ENCODE measurements at regions of chr3 and their contacts with region 1.

Region 1: GRCh38 chr3:131381444-131382291 is at the start of gene NUDT16:
- DNase-seq: peak; percentile 100
- H3K4me3 ChIP-seq: peak within 1 kb of the TSS; percentile 68 to 100 (median 82)
- H3K27ac ChIP-seq: peak within 1 kb of the TSS; percentile 83 to 97 (median 90)
- H3K4me1 ChIP-seq: peaks cover 0 to 28% (median 20%) of the 10 kb centered on the region in 4 donors
- H3K27me3 ChIP-seq: no peaks in the 10 kb centered on the region
- CTCF ChIP-seq: no peak
- EP300 ChIP-seq: peak in 1 of 4 donors; percentile 68
- POLR2A ChIP-seq: peak; percentile 83 to 94
- total RNA-seq, gene NUDT16: 17.6 to 26.0 (median 21.8) TPM

Region 2: DNA sequence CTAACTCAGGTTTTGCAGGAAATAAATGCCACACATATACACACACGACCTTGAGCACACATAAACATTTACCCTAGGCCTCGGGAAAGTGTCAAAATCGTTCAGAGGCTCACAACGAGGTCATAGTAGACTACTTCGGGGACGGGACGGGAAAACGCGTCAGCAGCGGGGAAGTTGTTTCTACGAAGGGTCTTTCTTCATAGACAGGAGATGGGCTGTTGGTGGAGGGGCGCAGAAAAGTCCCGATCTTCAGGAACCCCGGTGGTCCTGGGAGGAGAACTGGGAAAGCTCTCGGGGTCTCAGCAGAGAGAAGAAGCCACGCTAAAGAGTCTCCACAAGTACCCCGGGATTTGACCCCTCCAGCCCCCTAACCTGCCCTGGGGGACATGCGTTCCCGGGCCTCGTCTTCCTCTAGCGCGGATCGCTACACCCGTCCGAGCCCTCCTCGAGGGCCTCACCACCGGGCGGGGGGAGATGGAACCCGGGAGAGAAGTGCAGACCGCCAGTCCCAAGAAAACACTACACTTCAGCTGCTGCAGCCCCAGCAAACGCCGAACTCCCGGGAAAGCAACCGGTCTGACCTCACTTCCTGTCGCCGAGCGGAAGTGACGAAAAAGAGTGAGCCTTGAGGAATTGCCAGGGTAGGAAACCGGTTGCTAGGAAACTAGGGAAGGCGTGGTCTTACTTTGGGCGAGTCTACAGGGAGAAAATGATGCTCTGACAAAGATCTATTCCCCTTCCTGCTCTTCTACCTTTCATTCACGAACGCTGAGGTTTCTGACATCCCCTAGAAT is 635.2 kb before region 1 on chr3 and contains the start of gene PIK3R4:
- intact Hi-C with region 1: loop called (anchors 10 kb)
- DNase-seq: peak; percentile 97
- H3K4me3 ChIP-seq: peak within 1 kb of the TSS; percentile 75 to 95 (median 88)
- H3K27ac ChIP-seq: peak within 1 kb of the TSS; percentile 82 to 91 (median 88)
- H3K4me1 ChIP-seq: peaks cover 0 to 47% (median 44%) of the 10 kb centered on the region in 4 donors
- H3K27me3 ChIP-seq: no peaks in the 10 kb centered on the region
- CTCF ChIP-seq: no peak
- EP300 ChIP-seq: no peak
- POLR2A ChIP-seq: peak; percentile 51 to 69
- total RNA-seq, gene PIK3R4: 25.8 to 39.2 (median 31.6) TPM

Region 3: GRCh38 chr3:130857326-130858026 is 524.2 kb before region 1 on chr3:
- intact Hi-C with region 1: no loop called
- DNase-seq: no peak
- H3K4me3 ChIP-seq: no peak overlapping the region
- H3K27ac ChIP-seq: no peak overlapping the region
- H3K4me1 ChIP-seq: no peaks in the 10 kb centered on the region
- H3K27me3 ChIP-seq: no peaks in the 10 kb centered on the region
- CTCF ChIP-seq: no peak
- EP300 ChIP-seq: no peak
- POLR2A ChIP-seq: no peak

Region 4: GRCh38 chr3:130892759-130893375 is 488.8 kb before region 1 on chr3:
- intact Hi-C with region 1: loop called (anchors 5 kb)
- DNase-seq: peak; percentile 77
- H3K4me3 ChIP-seq: peak overlapping the region; percentile 70 to 88 (median 78)
- H3K27ac ChIP-seq: peak overlapping the region; percentile 92 to 98 (median 95)
- H3K4me1 ChIP-seq: peaks cover 0 to 23% (median 20%) of the 10 kb centered on the region in 4 donors
- H3K27me3 ChIP-seq: no peaks in the 10 kb centered on the region
- CTCF ChIP-seq: peak; percentile 75 to 91 (median 83)
- EP300 ChIP-seq: no peak
- POLR2A ChIP-seq: no peak

Region 5: DNA sequence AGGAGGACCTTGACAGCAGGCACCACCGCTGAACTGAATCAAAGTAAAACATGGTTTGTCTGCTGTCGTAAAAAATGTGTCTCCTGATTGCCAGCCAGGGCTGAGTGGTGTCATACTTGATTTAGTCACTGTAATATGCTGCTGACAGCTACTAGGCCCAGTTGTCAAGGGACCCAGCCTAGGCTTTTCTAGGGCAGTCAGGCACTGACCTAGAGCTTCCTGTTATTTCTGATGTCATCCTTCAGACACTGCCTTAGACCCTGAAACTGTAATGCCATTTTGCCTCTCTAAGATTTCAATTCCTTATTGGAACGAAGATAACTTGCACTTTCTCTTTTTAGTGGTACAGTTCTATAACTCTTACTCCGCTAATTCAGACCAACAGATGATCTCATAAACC is 123.8 kb after region 1 on chr3:
- intact Hi-C with region 1: loop called (anchors 2 kb)
- DNase-seq: no peak
- H3K4me3 ChIP-seq: no peak overlapping the region
- H3K27ac ChIP-seq: no peak overlapping the region
- H3K4me1 ChIP-seq: peaks cover 0 to 27% (median 21%) of the 10 kb centered on the region in 4 donors
- H3K27me3 ChIP-seq: no peaks in the 10 kb centered on the region
- CTCF ChIP-seq: no peak
- EP300 ChIP-seq: no peak
- POLR2A ChIP-seq: no peak

Region 6: GRCh38 chr3:132416807-132417694 is 1035.4 kb after region 1 on chr3 and contains the start of gene DNAJC13:
- intact Hi-C with region 1: no loop called
- DNase-seq: peak; percentile 97
- H3K4me3 ChIP-seq: peak within 1 kb of the TSS; percentile 92 to 100 (median 96)
- H3K27ac ChIP-seq: peak within 1 kb of the TSS; percentile 87 to 95 (median 94)
- H3K4me1 ChIP-seq: peaks cover 0 to 31% (median 20%) of the 10 kb centered on the region in 4 donors
- H3K27me3 ChIP-seq: no peaks in the 10 kb centered on the region
- CTCF ChIP-seq: no peak
- EP300 ChIP-seq: peak in 1 of 4 donors; percentile 36
- POLR2A ChIP-seq: peak; percentile 57 to 74
- total RNA-seq, gene DNAJC13: 33.2 to 55.9 (median 46.5) TPM

Measured in sigmoid colon (tissue), 7 donors.